Right ventricle myocardium inferior (tissue), 1 donor: ENCODE measurements at regions of chr4 and their contacts with region 1.

Region 1: GRCh38 chr4:150722908-150723362 is 141.0 kb downstream of the MAB21L2 start:
- DNase-seq: peak; percentile 90
- ATAC-seq: peak; percentile 99

Region 2: GRCh38 chr4:150348079-150348478 is 374.9 kb before region 1 on chr4:
- intact Hi-C with region 1: no loop called
- DNase-seq: no peak
- ATAC-seq: no peak

Region 3: GRCh38 chr4:150960818-150961217 is 237.9 kb after region 1 on chr4:
- intact Hi-C with region 1: loop called (anchors 10 kb)
- DNase-seq: no peak
- ATAC-seq: no peak